Activated T-helper 2 cell treated with anti-CD3 and anti-CD28 coated beads, Interferon-gamma antibody, Interleukin-2, Interleukin-4, amounts not matched to agents 10 μg/mL and 5 μg/mL and 100 μg/mL, durations not matched to agents 14 hours and 24 hours and 36 hours (primary cell): ENCODE measurements at regions of chr2 and their contacts with region 1.

Region 1: GRCh38 chr2:207311316-207312005 is 145.7 kb upstream of the KLF7 start:
- DNase-seq: no peak
- H3K4me3 Mint-ChIP-seq: no peak overlapping the region
- H3K27ac Mint-ChIP-seq: peak overlapping the region; percentile 68
- H3K4me1 Mint-ChIP-seq: peaks cover 55% of the 10 kb centered on the region
- H3K27me3 Mint-ChIP-seq: no peaks in the 10 kb centered on the region

Region 2: GRCh38 chr2:207283356-207283755 is 28.1 kb before region 1 on chr2:
- intact Hi-C with region 1: loop called (anchors 1 kb)
- DNase-seq: no peak
- H3K4me3 Mint-ChIP-seq: peak overlapping the region; percentile 55
- H3K27ac Mint-ChIP-seq: peak overlapping the region; percentile 82
- H3K4me1 Mint-ChIP-seq: peaks cover 67% of the 10 kb centered on the region
- H3K27me3 Mint-ChIP-seq: no peaks in the 10 kb centered on the region

Region 3: GRCh38 chr2:207291625-207292252 is 19.7 kb before region 1 on chr2:
- intact Hi-C with region 1: loop called (anchors 1 kb)
- DNase-seq: no peak
- H3K4me3 Mint-ChIP-seq: no peak overlapping the region
- H3K27ac Mint-ChIP-seq: peak overlapping the region; percentile 68
- H3K4me1 Mint-ChIP-seq: peaks cover 48% of the 10 kb centered on the region
- H3K27me3 Mint-ChIP-seq: no peaks in the 10 kb centered on the region

Region 4: GRCh38 chr2:207584952-207585351 is 273.5 kb after region 1 on chr2:
- intact Hi-C with region 1: no loop called
- DNase-seq: no peak
- H3K4me3 Mint-ChIP-seq: no peak overlapping the region
- H3K27ac Mint-ChIP-seq: no peak overlapping the region
- H3K4me1 Mint-ChIP-seq: peaks cover 21% of the 10 kb centered on the region
- H3K27me3 Mint-ChIP-seq: no peaks in the 10 kb centered on the region